ENCODE measurements at regions of chr18 and their contacts with region 1.

Region 1: GRCh38 chr18:493986-494983 is 6.2 kb downstream of the COLEC12 start:
- DNase-seq: peak; percentile 56
- H3K4me3 ChIP-seq: no peak overlapping the region
- CTCF ChIP-seq: no peak

Region 2: GRCh38 chr18:285817-286216 is 208.5 kb before region 1 on chr18:
- CTCF ChIA-PET with region 1: no interaction called
- POLR2A ChIA-PET with region 1: no interaction called
- DNase-seq: no peak
- H3K4me3 ChIP-seq: no peak overlapping the region
- CTCF ChIP-seq: no peak

Region 3: DNA sequence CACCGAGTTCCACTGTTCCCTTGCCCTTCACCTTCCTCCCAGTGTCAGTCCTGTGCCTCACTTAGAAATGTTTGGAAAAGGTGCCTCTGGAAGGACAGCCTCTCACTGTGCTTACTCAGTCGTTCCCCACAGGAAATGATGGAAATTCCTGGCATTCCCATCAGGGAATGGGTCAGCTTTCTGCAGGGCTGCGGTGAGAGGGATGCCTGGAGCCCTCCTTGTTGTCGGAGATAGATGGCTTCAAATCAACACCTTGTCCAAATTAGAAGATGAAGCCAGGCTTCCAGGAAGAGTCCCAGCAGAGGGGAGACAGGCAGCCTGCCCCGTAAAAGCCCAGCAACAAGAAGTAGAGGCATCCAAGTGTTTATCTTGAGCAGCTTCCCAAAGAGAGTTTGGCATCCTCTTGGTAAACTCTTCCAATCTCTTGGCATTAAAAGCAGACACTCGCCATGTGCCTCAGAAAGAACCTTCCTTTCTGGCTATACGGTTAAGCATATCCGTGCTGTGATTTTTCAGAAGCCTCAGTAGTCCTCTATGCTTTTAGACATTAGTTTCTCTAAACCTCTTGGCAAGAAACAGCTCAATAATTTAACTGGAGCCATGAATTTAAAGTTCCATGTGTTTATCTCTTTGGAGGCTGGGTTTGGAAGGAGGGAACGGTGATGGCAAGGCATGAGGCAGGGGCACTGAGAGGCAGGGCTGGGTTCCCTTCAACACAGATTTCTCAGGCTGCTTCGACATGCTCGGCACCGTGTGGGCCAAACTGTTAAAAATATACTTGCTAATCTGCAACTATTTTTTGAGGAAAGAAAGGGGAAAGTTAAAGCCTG is 18.9 kb before region 1 on chr18:
- CTCF ChIA-PET with region 1: interaction called, 10 read pairs
- POLR2A ChIA-PET with region 1: interaction called, 12 read pairs
- DNase-seq: peak; percentile 70
- H3K4me3 ChIP-seq: no peak overlapping the region
- CTCF ChIP-seq: no peak

Region 4: GRCh38 chr18:505483-506122 is 11.3 kb after region 1 on chr18:
- CTCF ChIA-PET with region 1: interaction called, 49 read pairs
- POLR2A ChIA-PET with region 1: no interaction called
- DNase-seq: no peak
- H3K4me3 ChIP-seq: no peak overlapping the region
- CTCF ChIP-seq: no peak

Region 5: GRCh38 chr18:616380-616995 is 122.2 kb after region 1 on chr18:
- CTCF ChIA-PET with region 1: interaction called, 11 read pairs
- POLR2A ChIA-PET with region 1: no interaction called
- DNase-seq: no peak
- H3K4me3 ChIP-seq: no peak overlapping the region
- CTCF ChIP-seq: peak; percentile 49